ENCODE measurements at regions of chr3 and their contacts with region 1.

Region 1: GRCh38 chr3:128316481-128316891 is 150.2 kb downstream of the DNAJB8 start:
- DNase-seq: peak; percentile 71
- H3K4me3 Mint-ChIP-seq: peak overlapping the region; percentile 17
- H3K27ac Mint-ChIP-seq: peak overlapping the region; percentile 63
- H3K4me1 Mint-ChIP-seq: peaks cover 52% of the 10 kb centered on the region
- H3K27me3 Mint-ChIP-seq: no peaks in the 10 kb centered on the region

Region 2: DNA sequence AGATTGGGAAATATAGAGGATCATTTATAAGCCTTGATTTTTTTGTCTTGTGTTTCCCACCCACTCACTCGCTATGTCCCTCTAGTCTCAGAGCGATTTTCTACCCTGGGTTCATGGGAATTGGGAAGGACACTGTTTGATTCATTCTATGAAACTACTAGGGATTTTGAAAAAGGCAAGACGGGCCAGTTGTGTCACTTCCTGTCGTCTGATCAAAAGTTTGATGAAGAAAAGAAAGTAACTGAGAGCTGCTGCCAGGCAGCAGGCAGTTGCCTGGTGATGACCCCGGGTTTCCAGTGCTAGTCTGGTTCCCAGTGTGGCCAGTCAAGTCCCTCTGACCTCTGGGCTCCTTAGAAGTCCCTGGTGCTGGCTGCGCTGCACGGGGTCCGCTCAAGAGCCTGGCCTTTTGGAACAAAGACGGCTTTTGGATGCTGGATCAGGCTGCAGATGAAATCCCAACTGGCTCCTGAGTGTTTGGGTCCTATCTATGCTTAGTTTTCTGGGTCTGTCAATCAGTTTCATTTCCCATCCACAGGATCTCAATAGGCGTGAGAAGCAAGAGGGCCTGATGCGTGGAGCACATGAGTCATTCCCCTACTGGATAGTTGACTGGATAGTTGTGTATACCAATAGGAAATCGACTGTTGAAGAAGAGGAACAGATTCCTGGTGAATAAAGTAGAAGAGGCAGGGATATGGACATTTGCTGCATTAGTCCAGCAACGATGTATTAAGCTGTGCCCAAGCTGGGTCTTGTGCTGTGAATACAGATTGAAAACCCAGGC is 73.5 kb before region 1 on chr3:
- CTCF ChIA-PET with region 1: no interaction called
- intact Hi-C with region 1: loop called (anchors 5 kb)
- DNase-seq: peak; percentile 49
- H3K4me3 Mint-ChIP-seq: no peak overlapping the region
- H3K27ac Mint-ChIP-seq: peak overlapping the region; percentile 79
- H3K4me1 Mint-ChIP-seq: peaks cover 18% of the 10 kb centered on the region
- H3K27me3 Mint-ChIP-seq: no peaks in the 10 kb centered on the region

Measured in activated naive CD4-positive, alpha-beta T cell treated with anti-CD3 and anti-CD28 coated beads for 36 hours (primary cell).